PC-9 (cell line): ENCODE measurements at regions of chr2 and their contacts with region 1.

Region 1: GRCh38 chr2:212979799-212980198 is 171.6 kb downstream of the IKZF2 start:
- DNase-seq: peak in 1 of 2 experiments; percentile 51
- H3K4me3 ChIP-seq: no peak overlapping the region
- H3K27ac ChIP-seq: peak overlapping the region; percentile 72
- H3K4me1 ChIP-seq: peaks cover 32% of the 10 kb centered on the region
- H3K27me3 ChIP-seq: no peaks in the 10 kb centered on the region
- CTCF ChIP-seq: no peak

Region 2: DNA sequence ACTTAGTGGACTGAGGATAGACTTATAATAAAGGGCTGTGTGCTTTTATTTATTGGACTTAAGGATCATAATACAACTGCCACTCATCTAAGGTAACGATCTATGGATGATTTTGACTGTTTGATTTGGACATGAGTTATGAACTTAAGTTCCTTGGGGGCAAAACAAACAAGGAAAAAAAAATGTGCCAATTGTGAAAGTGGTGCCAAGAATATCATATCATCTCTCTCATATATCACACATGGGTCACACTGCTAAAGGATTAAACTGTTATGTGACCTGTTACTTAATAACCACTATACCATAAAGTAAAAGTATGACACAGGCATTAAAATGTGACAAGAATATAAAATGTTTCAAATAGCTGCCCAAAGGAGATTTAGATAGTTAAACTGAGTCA is 1327.5 kb before region 1 on chr2:
- CTCF ChIA-PET with region 1: no interaction called
- POLR2A ChIA-PET with region 1: no interaction called
- intact Hi-C with region 1: no loop called
- DNase-seq: no peak
- H3K4me3 ChIP-seq: no peak overlapping the region
- H3K27ac ChIP-seq: no peak overlapping the region
- H3K4me1 ChIP-seq: no peaks in the 10 kb centered on the region
- H3K27me3 ChIP-seq: no peaks in the 10 kb centered on the region
- CTCF ChIP-seq: no peak

Region 3: GRCh38 chr2:212905640-212906220 is 74.1 kb before region 1 on chr2:
- CTCF ChIA-PET with region 1: no interaction called
- POLR2A ChIA-PET with region 1: interaction called, 33 read pairs
- intact Hi-C with region 1: no loop called
- DNase-seq: peak; percentile 54 to 96
- H3K4me3 ChIP-seq: peak overlapping the region; percentile 44; the same call in 1 of the 2 replicates
- H3K27ac ChIP-seq: peak overlapping the region; percentile 99
- H3K4me1 ChIP-seq: peaks cover 71% of the 10 kb centered on the region
- H3K27me3 ChIP-seq: no peaks in the 10 kb centered on the region
- CTCF ChIP-seq: no peak

Region 4: GRCh38 chr2:212919250-212919649 is 60.5 kb before region 1 on chr2:
- CTCF ChIA-PET with region 1: no interaction called
- POLR2A ChIA-PET with region 1: interaction called, 19 read pairs
- intact Hi-C with region 1: no loop called
- DNase-seq: peak; percentile 53 to 91
- H3K4me3 ChIP-seq: no peak overlapping the region
- H3K27ac ChIP-seq: peak overlapping the region; percentile 98
- H3K4me1 ChIP-seq: peaks cover 46% of the 10 kb centered on the region
- H3K27me3 ChIP-seq: no peaks in the 10 kb centered on the region
- CTCF ChIP-seq: no peak

Region 5: DNA sequence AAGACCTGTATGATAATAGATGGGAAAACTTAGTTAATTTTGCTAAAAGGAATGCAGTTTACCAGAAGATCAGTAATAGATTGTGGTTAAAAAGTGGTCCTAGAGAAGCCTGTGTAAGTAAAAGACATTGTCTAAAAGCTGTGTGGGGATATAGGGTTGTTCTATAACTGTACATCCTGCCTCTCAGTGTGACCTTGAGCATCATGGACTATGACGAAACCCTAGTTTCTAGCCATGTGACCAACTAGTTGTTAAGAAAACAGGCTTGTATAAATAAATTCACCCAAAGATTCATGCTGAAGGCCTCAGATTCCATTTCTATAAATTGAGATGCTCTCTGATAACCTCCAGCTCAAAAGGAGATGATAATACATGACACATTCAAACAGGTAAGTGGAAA is 10.9 kb after region 1 on chr2:
- CTCF ChIA-PET with region 1: interaction called, 12 read pairs
- POLR2A ChIA-PET with region 1: no interaction called
- intact Hi-C with region 1: no loop called
- DNase-seq: no peak
- H3K4me3 ChIP-seq: no peak overlapping the region
- H3K27ac ChIP-seq: no peak overlapping the region
- H3K4me1 ChIP-seq: no peaks in the 10 kb centered on the region
- H3K27me3 ChIP-seq: no peaks in the 10 kb centered on the region
- CTCF ChIP-seq: no peak

Region 6: GRCh38 chr2:213002383-213002782 is 22.6 kb after region 1 on chr2:
- CTCF ChIA-PET with region 1: no interaction called
- POLR2A ChIA-PET with region 1: no interaction called
- intact Hi-C with region 1: no loop called
- DNase-seq: no peak
- H3K4me3 ChIP-seq: no peak overlapping the region
- H3K27ac ChIP-seq: no peak overlapping the region
- H3K4me1 ChIP-seq: no peaks in the 10 kb centered on the region
- H3K27me3 ChIP-seq: no peaks in the 10 kb centered on the region
- CTCF ChIP-seq: no peak